ENCODE measurements at regions of chr9 and their contacts with region 1.

Region 1: GRCh38 chr9:100352727-100353505 is at the start of gene TEX10:
- DNase-seq: peak; percentile 82
- H3K4me3 Mint-ChIP-seq: peak within 1 kb of the TSS; percentile 94
- H3K27ac Mint-ChIP-seq: peak within 1 kb of the TSS; percentile 95
- H3K4me1 Mint-ChIP-seq: peaks cover 35% of the 10 kb centered on the region
- H3K27me3 Mint-ChIP-seq: no peaks in the 10 kb centered on the region
- CTCF ChIP-seq: no peak
- total RNA-seq, gene TEX10: 37.0 and 38.2 TPM in 2 replicates

Region 2: GRCh38 chr9:100281676-100282387 is 71.1 kb before region 1 on chr9:
- CTCF ChIA-PET with region 1: no interaction called
- POLR2A ChIA-PET with region 1: no interaction called
- intact Hi-C with region 1: no loop called
- DNase-seq: no peak
- H3K4me3 Mint-ChIP-seq: no peak overlapping the region
- H3K27ac Mint-ChIP-seq: no peak overlapping the region
- H3K4me1 Mint-ChIP-seq: no peaks in the 10 kb centered on the region
- H3K27me3 Mint-ChIP-seq: no peaks in the 10 kb centered on the region
- CTCF ChIP-seq: no peak

Region 3: GRCh38 chr9:100426530-100427428 is 73.9 kb after region 1 on chr9 and contains the start of gene MSANTD3:
- CTCF ChIA-PET with region 1: interaction called, 4 read pairs
- POLR2A ChIA-PET with region 1: interaction called, 143 read pairs
- intact Hi-C with region 1: loop called (anchors 2 kb)
- DNase-seq: peak; percentile 67
- H3K4me3 Mint-ChIP-seq: peak within 1 kb of the TSS; percentile 97
- H3K27ac Mint-ChIP-seq: peak within 1 kb of the TSS; percentile 98
- H3K4me1 Mint-ChIP-seq: peaks cover 45% of the 10 kb centered on the region
- H3K27me3 Mint-ChIP-seq: no peaks in the 10 kb centered on the region
- CTCF ChIP-seq: no peak
- total RNA-seq, gene MSANTD3: 41.3 and 56.3 TPM in 2 replicates